ENCODE measurements at regions of chr3 and their contacts with region 1.

Region 1: GRCh38 chr3:32467333-32468070 is 35.1 kb downstream of the CMTM6 start:
- DNase-seq: peak; percentile 78
- H3K4me3 Mint-ChIP-seq: peak overlapping the region; percentile 20
- H3K27ac Mint-ChIP-seq: peak overlapping the region; percentile 54
- H3K4me1 Mint-ChIP-seq: peaks cover 42% of the 10 kb centered on the region
- H3K27me3 Mint-ChIP-seq: no peaks in the 10 kb centered on the region

Region 2: DNA sequence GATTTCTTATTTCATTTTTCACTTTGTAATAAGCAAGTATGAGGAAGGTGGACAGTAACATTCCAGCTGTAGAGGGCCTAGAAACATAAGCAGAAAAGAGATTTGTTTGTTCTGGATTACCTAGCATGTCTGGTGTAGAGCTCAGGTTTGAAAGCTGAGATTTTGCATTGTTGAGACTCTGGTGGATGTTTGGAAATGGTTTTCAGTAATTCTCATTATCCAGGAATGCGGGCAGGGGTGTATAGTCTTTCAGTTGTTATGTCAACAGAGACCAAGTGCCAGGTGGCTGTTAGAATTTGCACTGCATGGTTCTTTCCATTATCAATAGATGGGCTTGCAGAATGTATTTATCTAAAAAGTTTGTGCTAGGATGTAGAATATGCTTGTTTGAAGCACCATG is 350.2 kb before region 1 on chr3:
- CTCF ChIA-PET with region 1: no interaction called
- intact Hi-C with region 1: loop called (anchors 10 kb)
- DNase-seq: no peak
- H3K4me3 Mint-ChIP-seq: no peak overlapping the region
- H3K27ac Mint-ChIP-seq: no peak overlapping the region
- H3K4me1 Mint-ChIP-seq: peaks cover 61% of the 10 kb centered on the region
- H3K27me3 Mint-ChIP-seq: no peaks in the 10 kb centered on the region

Region 3: DNA sequence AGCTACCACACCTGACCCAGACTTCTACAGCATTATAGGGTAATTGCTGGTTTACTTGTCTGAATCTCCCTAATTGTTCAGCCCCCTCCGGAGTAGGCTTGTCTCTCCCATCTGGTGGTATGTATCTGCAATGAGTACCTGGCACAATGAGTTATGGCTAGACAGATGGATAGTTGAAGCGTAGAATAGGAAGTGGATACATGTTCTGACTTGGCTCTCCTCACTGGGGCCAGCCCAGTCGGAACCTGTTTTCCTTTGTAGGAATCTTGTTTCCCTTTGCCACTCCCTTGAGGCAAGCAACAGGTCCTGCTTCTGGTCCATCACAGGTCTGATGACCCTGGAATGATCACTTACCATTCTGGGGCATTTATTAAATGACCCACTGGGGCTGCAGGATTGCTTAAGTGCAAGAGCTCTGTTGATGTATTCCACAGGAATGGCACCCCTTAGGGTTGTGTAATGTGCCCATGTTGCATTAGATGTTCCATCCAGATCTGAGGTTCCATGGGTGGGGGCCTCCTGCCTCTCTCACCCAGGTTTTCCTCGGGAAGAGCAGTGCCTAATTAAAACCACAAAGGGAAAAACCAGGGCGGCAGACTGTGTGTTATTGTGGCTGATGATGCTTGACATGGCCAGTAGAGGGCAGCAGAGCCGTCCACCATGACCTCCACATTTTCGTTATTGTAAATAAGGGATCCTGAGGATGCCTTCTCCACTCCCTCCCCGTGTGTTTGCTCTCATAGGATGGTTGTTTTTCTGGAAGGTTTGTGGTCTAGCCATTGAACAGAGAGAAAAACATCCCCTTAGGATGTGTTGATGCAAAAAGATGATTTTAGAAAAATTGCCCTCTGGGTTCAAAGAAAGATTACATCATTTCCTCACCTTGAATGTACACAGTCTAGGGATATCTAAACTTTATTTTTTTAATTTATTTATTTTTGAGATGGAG is 171.0 kb before region 1 on chr3:
- CTCF ChIA-PET with region 1: interaction called, 8 read pairs
- intact Hi-C with region 1: loop called (anchors 1 kb)
- DNase-seq: peak; percentile 80
- H3K4me3 Mint-ChIP-seq: peak overlapping the region; percentile 45
- H3K27ac Mint-ChIP-seq: peak overlapping the region; percentile 85
- H3K4me1 Mint-ChIP-seq: peaks cover 24% of the 10 kb centered on the region
- H3K27me3 Mint-ChIP-seq: no peaks in the 10 kb centered on the region

Region 4: GRCh38 chr3:32391643-32392535 is 75.6 kb before region 1 on chr3 and contains the start of gene CMTM7:
- CTCF ChIA-PET with region 1: interaction called, 37 read pairs
- intact Hi-C with region 1: no loop called
- DNase-seq: peak; percentile 82
- H3K4me3 Mint-ChIP-seq: peak within 1 kb of the TSS; percentile 95
- H3K27ac Mint-ChIP-seq: peak within 1 kb of the TSS; percentile 93
- H3K4me1 Mint-ChIP-seq: peaks cover 54% of the 10 kb centered on the region
- H3K27me3 Mint-ChIP-seq: no peaks in the 10 kb centered on the region
- total RNA-seq, gene CMTM7: 59.1 to 60.2 TPM

Region 5: GRCh38 chr3:32406486-32407408 is 60.8 kb before region 1 on chr3:
- CTCF ChIA-PET with region 1: interaction called, 12 read pairs
- intact Hi-C with region 1: no loop called
- DNase-seq: no peak
- H3K4me3 Mint-ChIP-seq: no peak overlapping the region
- H3K27ac Mint-ChIP-seq: peak overlapping the region; percentile 48
- H3K4me1 Mint-ChIP-seq: peaks cover 83% of the 10 kb centered on the region
- H3K27me3 Mint-ChIP-seq: no peaks in the 10 kb centered on the region

Region 6: DNA sequence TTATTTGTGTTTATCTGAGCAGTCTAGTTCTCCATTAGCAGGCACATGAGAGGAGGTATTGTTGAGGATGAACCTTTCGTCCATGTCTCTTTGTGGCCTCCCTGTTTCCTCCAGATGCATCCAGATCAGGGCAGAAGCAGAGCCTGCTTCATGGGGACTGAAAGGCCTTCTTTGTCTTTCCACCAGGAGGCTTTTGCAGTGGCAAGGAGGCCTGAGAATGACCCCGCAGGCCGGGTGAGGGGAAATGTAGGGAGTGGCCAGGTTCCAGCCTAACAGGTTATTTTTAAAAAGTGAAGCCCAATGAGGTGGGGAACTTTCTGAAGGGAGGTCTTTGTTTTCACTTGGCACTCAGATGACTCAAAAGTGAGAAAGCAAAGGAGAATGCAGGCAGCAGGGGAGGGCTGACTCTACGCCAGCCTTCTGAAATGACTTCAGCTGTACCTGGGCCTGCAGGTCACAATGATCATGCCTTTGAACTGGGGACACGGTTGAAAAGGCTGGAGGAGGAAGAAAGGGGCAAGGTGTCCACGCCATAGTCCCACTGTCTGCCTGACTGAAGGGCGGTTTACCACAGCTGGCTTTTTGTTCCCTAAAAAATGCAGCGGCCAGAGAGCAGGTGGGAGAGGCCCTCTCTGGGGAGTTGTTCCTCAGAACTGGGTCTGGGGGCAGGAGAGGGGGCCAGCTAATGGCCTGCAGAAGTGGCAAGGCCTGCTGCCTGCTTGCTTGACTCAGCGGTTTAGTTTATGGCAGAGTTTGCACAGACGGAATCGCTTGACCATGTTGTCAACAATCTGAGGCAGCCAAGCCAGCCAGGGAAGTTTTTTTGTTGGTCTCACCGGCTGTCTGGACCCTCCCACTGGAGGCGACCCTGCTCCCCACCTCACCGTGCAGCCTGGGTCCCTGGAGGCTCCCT is 47.1 kb before region 1 on chr3:
- CTCF ChIA-PET with region 1: interaction called, 36 read pairs
- intact Hi-C with region 1: no loop called
- DNase-seq: peak; percentile 81
- H3K4me3 Mint-ChIP-seq: peak overlapping the region; percentile 66
- H3K27ac Mint-ChIP-seq: peak overlapping the region; percentile 94
- H3K4me1 Mint-ChIP-seq: peaks cover 92% of the 10 kb centered on the region
- H3K27me3 Mint-ChIP-seq: no peaks in the 10 kb centered on the region

Region 7: DNA sequence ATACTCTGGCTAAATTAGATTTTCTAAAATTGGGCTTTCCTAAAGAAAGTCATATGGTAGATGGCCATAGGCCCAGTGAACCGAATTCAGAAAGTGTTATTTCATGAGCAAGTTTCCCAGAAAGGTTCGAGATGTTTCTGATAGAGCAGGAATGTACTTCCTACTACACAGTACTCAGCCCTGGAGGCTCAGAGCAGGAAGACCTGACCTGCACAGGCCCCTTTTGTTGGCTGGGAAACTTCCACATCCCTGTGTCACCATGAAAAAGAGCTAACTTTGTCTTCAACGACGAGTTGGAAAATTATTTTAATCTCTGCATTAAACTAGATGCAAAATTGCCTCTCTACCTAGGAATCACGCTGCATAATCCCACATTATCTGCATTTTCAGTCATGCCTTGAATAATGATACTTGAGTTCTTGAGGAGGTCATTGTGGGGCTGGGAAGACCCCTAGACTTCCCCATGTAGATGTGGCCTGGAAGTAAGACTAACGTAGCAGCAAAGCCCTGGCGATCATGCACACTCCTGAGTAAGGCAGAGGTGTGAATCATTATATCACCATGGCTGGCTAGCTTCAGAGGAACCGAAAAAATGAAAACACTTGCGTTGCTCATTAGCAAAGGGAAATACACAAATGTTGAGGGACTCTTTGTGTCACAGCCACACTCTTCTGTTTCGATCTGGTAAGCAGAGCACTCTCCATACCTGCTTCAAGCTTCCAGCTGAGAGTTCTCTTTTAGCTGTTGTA is 28.7 kb before region 1 on chr3:
- CTCF ChIA-PET with region 1: interaction called, 15 read pairs
- intact Hi-C with region 1: no loop called
- DNase-seq: peak; percentile 67
- H3K4me3 Mint-ChIP-seq: peak overlapping the region; percentile 19
- H3K27ac Mint-ChIP-seq: peak overlapping the region; percentile 84
- H3K4me1 Mint-ChIP-seq: peaks cover 79% of the 10 kb centered on the region
- H3K27me3 Mint-ChIP-seq: no peaks in the 10 kb centered on the region

Region 8: DNA sequence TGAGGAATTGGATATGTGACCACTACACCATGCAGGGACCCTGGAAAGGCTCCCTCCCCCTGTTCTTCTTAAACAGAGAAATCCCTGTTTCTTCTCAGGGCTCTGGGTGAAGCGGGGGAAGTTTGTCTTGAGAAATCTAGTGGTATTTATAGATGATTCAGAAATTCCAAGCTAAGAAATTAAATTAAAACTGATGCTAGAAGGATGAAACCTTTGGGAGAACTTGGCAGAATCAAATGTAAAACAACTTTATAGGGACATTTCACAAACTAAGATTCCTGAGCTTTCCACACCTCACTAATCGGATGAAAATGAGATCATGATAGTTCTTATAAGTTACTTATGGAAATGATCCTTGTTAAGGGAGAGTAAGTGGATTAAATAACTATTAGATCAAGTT is 863.9 kb after region 1 on chr3:
- CTCF ChIA-PET with region 1: no interaction called
- intact Hi-C with region 1: no loop called
- DNase-seq: no peak
- H3K4me3 Mint-ChIP-seq: no peak overlapping the region
- H3K27ac Mint-ChIP-seq: no peak overlapping the region
- H3K4me1 Mint-ChIP-seq: no peaks in the 10 kb centered on the region
- H3K27me3 Mint-ChIP-seq: peaks cover 2% of the 10 kb centered on the region

Measured in activated naive CD4-positive, alpha-beta T cell treated with anti-CD3 and anti-CD28 coated beads for 36 hours (primary cell).